Dorsolateral prefrontal cortex (tissue), 120 donors: ENCODE measurements at regions of chr2 and their contacts with region 1.

Region 1: DNA sequence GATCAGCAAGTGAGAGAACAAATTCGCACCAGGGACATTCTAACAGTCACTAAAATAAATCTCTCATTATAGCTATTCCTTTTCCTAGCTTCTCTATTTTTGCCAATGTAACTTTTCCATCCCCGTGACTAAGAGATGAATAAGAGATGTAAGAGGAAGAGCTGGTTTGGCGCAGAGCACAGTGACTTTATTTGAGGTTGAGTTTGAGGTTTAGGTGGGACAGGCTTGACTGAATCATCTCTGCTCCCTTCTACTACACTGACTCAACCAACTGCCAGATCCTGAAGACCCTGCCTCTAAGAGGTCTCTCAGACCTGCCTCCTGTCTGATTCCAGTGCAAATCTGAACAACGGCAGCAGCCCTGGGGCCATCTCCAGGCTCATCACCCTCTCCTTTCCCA is 28.0 kb downstream of the RFX8 start:
- DNase-seq: no peak
- H3K4me3 ChIP-seq: no peak overlapping the region
- H3K27ac ChIP-seq: peak overlapping the region in 1 of 59 donors; percentile 47
- H3K27me3 ChIP-seq: no peaks in the 10 kb centered on the region
- CTCF ChIP-seq: no peak

Region 2: GRCh38 chr2:101398116-101398821 is 48.6 kb before region 1 on chr2:
- intact Hi-C with region 1: loop called in 1 of 2 experiments (anchors 2 kb)
- DNase-seq: peak in 4 of 10 donors; percentile 50 to 78 (median 66)
- H3K4me3 ChIP-seq: no peak overlapping the region
- H3K27ac ChIP-seq: peak overlapping the region in 20 of 59 donors; percentile 1 to 59 (median 35)
- H3K27me3 ChIP-seq: no peaks in the 10 kb centered on the region
- CTCF ChIP-seq: no peak

Region 3: DNA sequence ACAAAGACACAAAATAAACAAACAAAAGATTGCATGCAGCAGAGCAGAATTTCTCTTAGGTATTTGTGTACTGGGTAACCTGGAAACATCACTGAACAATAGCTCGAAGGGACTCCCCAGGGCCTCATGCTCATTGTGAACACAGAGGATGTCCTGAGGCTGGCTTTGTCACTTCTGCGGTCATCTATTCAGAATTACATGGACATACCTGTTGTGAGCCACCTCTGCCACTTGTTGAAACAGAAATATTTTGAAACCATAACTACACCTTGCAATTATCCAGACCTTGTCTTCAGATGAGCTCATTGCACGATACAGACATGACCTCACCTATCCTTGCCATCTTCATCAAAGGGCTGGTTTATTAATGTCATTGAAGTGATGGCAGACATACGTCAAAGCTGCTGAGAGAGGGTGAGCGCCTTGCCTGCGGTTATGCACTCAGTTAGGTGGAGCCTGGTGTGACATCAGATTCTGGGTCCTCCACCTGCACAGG is 36.1 kb before region 1 on chr2:
- intact Hi-C with region 1: no loop called
- DNase-seq: no peak
- H3K4me3 ChIP-seq: no peak overlapping the region
- H3K27ac ChIP-seq: no peak overlapping the region
- H3K27me3 ChIP-seq: no peaks in the 10 kb centered on the region
- CTCF ChIP-seq: no peak